ENCODE measurements at regions of chr16 and their contacts with region 1.

Region 1: DNA sequence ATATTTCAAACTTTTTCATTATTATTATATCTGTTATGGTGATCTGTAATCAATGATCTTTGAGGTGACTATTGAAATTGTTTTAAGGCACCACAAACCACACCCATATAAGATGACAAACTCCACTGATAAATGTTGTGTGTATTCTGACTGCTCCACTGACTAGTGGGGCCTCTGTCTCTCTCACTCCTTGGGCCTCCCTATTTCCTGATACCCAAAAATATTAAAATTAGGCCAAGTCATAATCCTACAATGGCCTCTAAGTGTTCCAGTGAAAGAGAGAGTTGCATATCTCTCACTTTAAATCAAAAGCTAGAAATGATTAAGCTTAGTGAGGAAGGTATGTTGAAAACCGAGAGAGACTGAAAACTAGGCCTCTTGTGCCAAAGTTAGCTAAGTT is 23.4 kb downstream of the CYLD start:
- DNase-seq: no peak
- ATAC-seq: peak; percentile 84
- H3K4me3 Mint-ChIP-seq: peak overlapping the region; percentile 34
- H3K27ac Mint-ChIP-seq: peak overlapping the region; percentile 92
- H3K4me1 Mint-ChIP-seq: peaks cover 95% of the 10 kb centered on the region
- H3K27me3 Mint-ChIP-seq: no peaks in the 10 kb centered on the region

Region 2: GRCh38 chr16:50273681-50274325 is 491.5 kb before region 1 on chr16:
- CTCF ChIA-PET with region 1: no interaction called
- POLR2A ChIA-PET with region 1: interaction called, 4 read pairs
- intact Hi-C with region 1: loop called in 1 of 2 experiments (anchors 5 kb)
- DNase-seq: peak; percentile 73
- ATAC-seq: peak; percentile 37
- H3K4me3 Mint-ChIP-seq: peak overlapping the region; percentile 97
- H3K27ac Mint-ChIP-seq: peak overlapping the region; percentile 100
- H3K4me1 Mint-ChIP-seq: peaks cover 92% of the 10 kb centered on the region
- H3K27me3 Mint-ChIP-seq: no peaks in the 10 kb centered on the region

Region 3: GRCh38 chr16:50781043-50781442 is 15.8 kb after region 1 on chr16:
- CTCF ChIA-PET with region 1: interaction called, 8 read pairs
- POLR2A ChIA-PET with region 1: interaction called, 3 read pairs
- intact Hi-C with region 1: loop called (anchors 1 kb)
- DNase-seq: peak; percentile 49
- ATAC-seq: peak; percentile 64
- H3K4me3 Mint-ChIP-seq: no peak overlapping the region
- H3K27ac Mint-ChIP-seq: peak overlapping the region; percentile 77
- H3K4me1 Mint-ChIP-seq: peaks cover 55% of the 10 kb centered on the region
- H3K27me3 Mint-ChIP-seq: no peaks in the 10 kb centered on the region